Mammary epithelial cell (primary cell): ENCODE measurements at regions of chr20 and their contacts with region 1.

Region 1: DNA sequence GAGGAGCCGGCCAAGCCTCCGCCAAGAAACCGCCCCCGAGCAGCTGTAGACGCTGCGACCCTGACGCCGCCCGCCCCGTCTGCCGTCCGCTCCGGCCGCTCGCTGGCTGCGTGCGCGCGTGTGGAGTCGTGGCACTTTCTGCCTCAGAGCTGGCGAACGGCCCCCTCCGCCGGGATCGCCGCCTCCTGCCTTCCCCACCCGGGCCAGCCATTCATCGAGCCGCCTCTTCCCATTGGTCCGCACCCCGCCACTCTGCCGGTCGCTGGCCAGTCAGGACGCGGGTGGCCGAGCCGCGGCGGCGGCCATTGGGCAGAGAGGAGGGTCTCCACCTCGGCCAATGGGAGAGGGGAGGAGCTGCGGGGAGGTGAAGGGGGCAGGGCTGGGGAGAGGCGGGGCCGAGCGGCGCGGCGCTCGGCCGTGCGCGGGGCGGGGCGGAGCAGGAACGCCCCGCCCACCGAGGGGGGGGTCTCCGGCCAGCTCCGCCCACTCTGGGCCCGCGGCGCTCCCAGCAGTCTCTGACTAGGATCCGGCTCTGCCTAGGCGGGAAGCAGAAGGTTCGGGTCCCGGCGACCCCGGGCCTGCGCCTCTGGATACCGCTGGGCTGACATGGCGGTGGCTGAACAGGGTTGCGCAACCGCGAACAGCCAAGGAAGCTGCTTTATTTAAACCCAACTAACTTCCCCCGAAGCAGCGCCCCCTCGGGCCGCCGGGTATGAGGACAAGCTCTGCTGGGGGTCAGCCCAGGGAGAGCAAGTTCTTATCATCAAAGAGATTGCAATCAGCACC is at the start of gene RRBP1:
- DNase-seq: peak; percentile 99
- H3K4me3 ChIP-seq: peak within 1 kb of the TSS; percentile 78 to 88 (median 85)
- H3K27ac ChIP-seq: peak within 1 kb of the TSS; percentile 67
- H3K4me1 ChIP-seq: peaks cover 11% of the 10 kb centered on the region
- H3K27me3 ChIP-seq: no peaks in the 10 kb centered on the region
- CTCF ChIP-seq: peak; percentile 45 to 68
- total RNA-seq, gene RRBP1: 85.2 to 230 TPM

Region 2: DNA sequence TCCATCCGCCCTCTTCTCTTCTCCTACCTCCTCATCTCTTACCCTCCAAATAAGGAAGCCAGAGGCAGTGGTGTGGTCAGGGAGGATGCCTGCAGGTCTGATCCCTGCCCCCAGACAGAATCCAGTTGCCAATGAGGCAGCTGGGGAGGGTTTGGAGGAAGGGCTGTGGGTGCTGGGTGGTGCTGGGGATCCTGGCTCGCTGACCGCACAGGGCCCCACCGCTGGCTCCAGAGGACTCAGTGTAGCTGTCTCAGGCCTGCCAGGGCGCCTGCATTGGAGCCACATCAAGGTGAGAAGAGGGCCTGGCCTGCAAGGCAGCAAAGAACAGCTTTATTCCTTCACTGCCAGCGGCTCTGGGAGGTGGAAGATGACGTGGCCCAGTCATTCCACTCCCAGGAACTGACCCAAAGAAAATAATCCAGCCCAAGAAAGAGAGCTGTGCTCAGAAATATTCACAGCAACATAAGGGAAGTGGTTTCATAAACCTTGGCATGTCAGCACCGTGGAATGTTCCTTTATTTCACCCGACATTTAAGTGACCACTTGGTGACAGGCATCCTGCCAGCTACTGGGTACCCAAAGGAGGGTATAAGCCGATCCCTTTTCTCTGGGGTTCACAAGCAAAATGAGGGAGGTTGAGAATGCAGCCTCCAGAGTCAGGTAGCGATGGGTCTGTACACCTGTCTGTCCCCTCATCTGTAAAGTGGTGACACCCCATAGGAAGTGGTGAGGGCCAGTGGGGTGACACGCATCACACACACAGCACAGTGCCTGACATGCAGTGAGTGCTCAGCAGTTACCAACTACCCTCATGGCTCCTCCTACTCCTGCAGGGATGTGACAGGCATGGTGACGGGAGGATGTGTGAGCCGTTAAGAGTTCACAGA is 161.2 kb after region 1 on chr20:
- CTCF ChIA-PET with region 1: no interaction called
- dilution Hi-C with region 1: no loop called
- in situ Hi-C with region 1: no loop called
- intact Hi-C with region 1: loop called (anchors 2 kb)
- DNase-seq: peak; percentile 97
- H3K4me3 ChIP-seq: peak overlapping the region in 1 of 3 experiments; percentile 5
- H3K27ac ChIP-seq: peak overlapping the region; percentile 50
- H3K4me1 ChIP-seq: peaks cover 48% of the 10 kb centered on the region
- H3K27me3 ChIP-seq: no peaks in the 10 kb centered on the region
- CTCF ChIP-seq: no peak

Region 3: GRCh38 chr20:17892189-17892938 is 210.1 kb after region 1 on chr20:
- CTCF ChIA-PET with region 1: interaction called, 4 read pairs
- dilution Hi-C with region 1: loop called (anchors 5 kb)
- in situ Hi-C with region 1: loop called in 1 of 2 experiments (anchors 25 kb)
- intact Hi-C with region 1: loop called (anchors 2 kb)
- DNase-seq: no peak
- H3K4me3 ChIP-seq: no peak overlapping the region
- H3K27ac ChIP-seq: no peak overlapping the region
- H3K4me1 ChIP-seq: peaks cover 24% of the 10 kb centered on the region
- H3K27me3 ChIP-seq: no peaks in the 10 kb centered on the region
- CTCF ChIP-seq: no peak

Region 4: DNA sequence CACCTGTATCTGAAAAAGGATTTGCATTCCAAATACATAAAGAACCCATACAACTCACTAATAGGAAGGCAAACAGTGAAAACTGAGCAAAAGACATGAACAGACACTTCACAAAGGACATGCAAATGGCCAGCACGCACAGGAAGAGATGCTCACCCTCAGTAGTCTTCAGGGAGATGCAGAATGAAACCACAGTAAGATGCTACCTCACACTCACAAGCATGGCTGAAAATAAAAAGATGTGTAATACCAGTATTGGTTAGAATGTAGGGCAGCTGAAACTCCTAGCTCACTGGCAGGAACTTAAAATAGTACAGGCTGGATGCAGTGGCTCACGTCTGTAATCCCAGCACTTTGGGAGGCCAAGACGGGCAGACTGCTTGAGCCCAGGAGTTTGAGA is 221.7 kb after region 1 on chr20:
- CTCF ChIA-PET with region 1: no interaction called
- dilution Hi-C with region 1: no loop called
- in situ Hi-C with region 1: loop called (anchors 5 to 25 kb)
- intact Hi-C with region 1: no loop called
- DNase-seq: no peak
- H3K4me3 ChIP-seq: no peak overlapping the region
- H3K27ac ChIP-seq: no peak overlapping the region
- H3K4me1 ChIP-seq: no peaks in the 10 kb centered on the region
- H3K27me3 ChIP-seq: no peaks in the 10 kb centered on the region
- CTCF ChIP-seq: no peak

Region 5: DNA sequence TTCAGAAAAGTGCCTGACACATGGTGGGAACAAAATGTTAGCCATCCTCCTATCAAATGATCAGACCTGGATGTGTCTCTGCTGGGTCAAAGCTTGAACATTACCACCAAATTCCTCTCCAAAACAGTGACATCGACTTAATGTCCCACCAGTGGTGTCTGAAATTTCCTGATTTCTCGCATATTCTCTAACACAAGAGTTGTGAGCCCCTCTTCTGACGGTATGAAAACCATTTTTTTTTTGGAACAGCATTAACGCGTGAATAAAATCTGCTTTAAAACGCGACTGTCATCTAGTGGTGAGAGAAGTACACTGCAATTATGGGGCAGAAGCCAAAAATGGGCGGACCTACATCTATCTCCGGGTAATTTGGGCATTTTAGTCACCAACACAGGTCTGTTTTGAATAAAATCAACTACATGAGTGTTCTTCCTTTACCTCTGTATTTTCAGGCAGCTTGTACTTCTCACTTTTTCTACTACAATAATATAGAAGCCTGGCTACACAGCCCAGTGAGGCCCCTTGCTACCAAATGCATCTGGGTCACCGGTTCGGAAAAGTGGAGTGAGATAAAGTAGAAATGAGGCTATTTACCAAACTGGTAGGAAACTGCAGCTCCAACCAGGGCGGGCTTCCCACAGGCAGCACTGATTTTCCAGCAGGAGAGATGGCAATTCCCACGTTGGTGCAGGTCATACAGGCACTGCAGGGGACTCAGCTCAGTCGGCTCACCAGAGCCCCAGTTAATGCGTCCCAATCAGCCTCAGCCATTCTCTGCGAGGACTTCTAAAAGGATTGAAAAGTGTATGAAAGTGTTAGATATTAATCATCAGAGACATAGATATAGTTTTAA is 313.9 kb after region 1 on chr20:
- CTCF ChIA-PET with region 1: no interaction called
- dilution Hi-C with region 1: no loop called
- in situ Hi-C with region 1: no loop called
- intact Hi-C with region 1: loop called (anchors 1 kb)
- DNase-seq: peak; percentile 55
- H3K4me3 ChIP-seq: no peak overlapping the region
- H3K27ac ChIP-seq: no peak overlapping the region
- H3K4me1 ChIP-seq: peaks cover 14% of the 10 kb centered on the region
- H3K27me3 ChIP-seq: no peaks in the 10 kb centered on the region
- CTCF ChIP-seq: peak; percentile 98 to 100